ENCODE measurements at regions of chr16 and their contacts with region 1.

Region 1: DNA sequence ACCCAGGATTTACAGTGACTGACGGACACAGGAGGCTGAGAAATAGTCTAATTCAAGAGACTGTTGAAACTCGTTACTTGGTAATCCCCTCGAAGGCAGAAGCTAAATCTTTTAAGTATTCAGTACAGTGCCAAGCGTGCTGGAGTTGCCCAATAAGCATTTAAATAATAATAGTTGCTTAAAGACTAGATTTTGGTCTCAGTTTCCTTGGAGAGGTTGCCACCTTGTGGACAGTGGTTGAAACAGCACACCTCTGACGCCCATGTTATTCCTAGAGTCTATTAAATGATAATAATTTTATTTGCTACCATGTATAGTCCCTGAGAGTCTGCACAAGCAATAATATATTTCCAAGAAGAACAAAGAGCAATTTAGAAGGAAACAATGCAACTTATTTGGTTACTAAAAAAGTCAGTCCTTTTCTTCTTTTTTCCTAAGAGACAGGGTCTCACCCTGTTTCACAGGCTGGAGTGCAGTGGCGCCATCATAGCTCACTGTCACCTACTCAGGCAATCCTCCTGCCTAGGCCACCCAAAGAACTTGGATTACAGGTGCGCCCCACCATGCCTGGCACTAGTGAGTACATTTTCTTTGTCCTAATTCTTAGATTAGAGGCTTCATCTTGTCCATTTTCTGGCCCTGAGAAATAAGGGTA is 138.0 kb upstream of the NUDT7 start:
- DNase-seq: peak; percentile 48
- CTCF ChIP-seq: peak; percentile 79

Region 2: DNA sequence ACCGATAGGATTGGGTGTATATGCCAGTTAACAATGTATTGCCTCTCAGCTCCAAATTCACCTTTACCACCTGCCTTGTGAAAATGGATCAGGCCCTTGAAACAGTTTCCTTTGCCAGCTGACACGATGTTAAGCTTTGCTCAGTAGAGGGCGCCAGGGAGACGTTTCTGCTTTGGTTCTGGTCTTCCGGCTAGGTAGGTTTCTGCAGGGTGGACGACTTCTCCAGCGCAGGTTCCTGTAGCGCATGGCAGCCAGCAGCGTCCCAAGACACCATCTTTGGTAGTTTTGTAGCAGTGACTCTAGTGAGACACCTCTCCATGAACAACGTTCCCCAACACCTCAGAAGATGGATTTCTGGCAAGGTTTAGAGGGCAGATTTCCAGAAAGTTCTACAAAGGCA is 361.1 kb before region 1 on chr16:
- CTCF ChIA-PET with region 1: interaction called, 59 read pairs
- POLR2A ChIA-PET with region 1: no interaction called
- DNase-seq: no peak
- CTCF ChIP-seq: peak; percentile 35

Region 3: GRCh38 chr16:77236063-77236511 is 348.2 kb before region 1 on chr16:
- CTCF ChIA-PET with region 1: interaction called, 184 read pairs
- POLR2A ChIA-PET with region 1: no interaction called
- DNase-seq: peak; percentile 87
- CTCF ChIP-seq: peak; percentile 98

Region 4: DNA sequence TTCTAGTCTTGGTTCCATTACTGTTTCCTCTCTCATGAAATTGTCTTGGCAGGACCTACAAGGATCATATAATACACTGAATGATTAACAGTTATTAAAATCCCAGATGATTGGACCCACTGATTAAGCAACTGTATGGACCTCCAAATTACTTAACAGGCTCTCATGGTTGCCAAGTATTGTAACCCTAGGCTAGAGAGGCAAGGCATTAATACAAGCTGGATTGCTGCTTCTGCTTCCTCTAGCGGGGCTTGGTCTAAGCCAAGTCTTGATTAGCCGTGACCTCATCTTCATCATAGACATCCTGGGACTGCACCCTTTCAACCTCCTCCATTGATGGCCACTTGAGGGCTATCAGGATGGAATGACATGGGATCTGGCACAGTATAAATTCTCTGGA is 338.2 kb before region 1 on chr16:
- CTCF ChIA-PET with region 1: interaction called, 10 read pairs
- POLR2A ChIA-PET with region 1: no interaction called
- DNase-seq: no peak
- CTCF ChIP-seq: no peak

Region 5: DNA sequence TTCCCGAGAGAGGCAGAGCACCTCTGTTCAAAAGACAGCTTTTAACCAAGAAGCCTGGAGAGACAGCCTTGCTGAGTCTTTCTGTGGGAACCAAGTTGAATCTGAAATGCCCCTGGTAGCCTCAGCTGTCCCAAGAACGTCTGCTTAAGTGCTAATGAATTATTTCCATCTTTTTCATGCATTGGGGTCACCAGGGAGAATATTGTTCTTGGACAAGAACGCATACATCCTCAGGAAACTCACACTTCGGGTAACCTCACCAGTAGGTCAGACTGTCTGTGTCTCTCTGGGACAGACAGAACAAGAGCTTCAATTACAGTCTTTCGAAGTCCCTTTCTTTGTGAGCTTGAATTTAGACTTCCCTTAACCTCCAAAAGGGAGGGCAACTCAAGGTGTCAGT is 14.9 kb before region 1 on chr16:
- CTCF ChIA-PET with region 1: interaction called, 62 read pairs
- POLR2A ChIA-PET with region 1: no interaction called
- DNase-seq: no peak
- CTCF ChIP-seq: no peak

Region 6: DNA sequence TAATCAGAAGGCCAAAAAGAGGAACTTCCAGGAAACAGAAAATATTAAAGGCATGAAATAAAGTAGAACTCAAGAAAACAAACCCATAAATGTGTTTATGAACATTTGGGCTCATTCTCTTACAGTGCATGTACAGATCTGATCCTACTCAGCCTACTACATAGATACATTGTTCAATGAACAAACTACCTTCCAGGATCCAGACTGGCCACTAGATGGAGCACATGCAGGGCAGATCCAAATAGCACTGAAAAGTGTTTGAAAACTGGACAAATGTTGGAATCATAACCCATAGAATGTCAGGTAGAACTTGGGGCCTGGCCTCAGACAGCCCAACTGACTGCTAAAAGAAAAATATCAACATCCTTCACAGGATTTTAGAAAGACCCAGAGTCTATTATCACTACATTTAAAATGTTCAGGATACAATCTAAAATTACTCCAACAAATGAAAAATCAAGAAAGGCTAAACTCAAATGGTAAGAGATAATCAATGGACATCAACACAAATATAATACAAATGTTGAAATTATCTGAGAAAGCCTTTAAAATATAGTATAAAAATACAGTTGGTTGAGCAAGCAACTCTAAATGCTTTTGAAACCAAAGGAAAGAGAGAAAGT is 15.6 kb after region 1 on chr16:
- CTCF ChIA-PET with region 1: interaction called, 10 read pairs
- POLR2A ChIA-PET with region 1: no interaction called
- DNase-seq: peak; percentile 22
- CTCF ChIP-seq: peak; percentile 76

Region 7: DNA sequence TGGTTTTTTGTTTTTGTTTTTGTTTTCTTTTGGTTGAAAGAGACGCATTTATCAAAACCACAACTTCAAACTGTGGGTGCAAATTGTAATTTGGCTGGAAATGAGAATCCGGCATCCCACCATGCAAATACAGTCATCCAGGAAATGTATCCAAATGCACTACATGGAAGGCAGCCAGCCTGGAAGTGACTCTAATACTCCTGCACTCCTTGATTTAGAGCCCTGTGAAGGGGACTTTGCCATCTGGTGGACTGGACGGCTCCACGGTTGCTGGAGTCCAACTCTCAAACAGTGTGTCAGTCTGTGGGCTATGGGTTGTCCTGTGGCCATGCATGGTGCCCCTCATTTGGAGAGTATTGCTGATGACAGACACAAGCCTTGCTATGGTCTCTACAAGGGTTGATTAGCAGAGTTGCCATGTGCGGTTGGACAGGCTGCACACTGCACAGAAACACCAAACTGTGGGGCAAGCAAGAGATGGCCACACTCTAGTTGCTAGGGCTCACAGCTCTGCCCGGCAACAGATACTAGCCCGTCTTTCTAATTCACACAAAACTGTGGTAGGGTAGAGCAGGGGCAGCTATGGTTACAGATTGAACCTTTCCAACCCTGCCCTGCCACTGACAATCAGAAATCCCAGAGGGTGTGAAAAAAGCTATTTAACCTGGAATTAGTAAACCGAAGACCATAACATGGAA is 266.5 kb after region 1 on chr16:
- CTCF ChIA-PET with region 1: no interaction called
- POLR2A ChIA-PET with region 1: no interaction called
- DNase-seq: no peak
- CTCF ChIP-seq: no peak

Region 8: GRCh38 chr16:78002915-78003538 is 418.7 kb after region 1 on chr16:
- CTCF ChIA-PET with region 1: interaction called, 10 read pairs
- POLR2A ChIA-PET with region 1: no interaction called
- DNase-seq: peak; percentile 80
- CTCF ChIP-seq: peak; percentile 83

Measured in GM10248 (cell line).